SK-N-SH (cell line): ENCODE measurements at regions of chr1 and their contacts with region 1.

Region 1: DNA sequence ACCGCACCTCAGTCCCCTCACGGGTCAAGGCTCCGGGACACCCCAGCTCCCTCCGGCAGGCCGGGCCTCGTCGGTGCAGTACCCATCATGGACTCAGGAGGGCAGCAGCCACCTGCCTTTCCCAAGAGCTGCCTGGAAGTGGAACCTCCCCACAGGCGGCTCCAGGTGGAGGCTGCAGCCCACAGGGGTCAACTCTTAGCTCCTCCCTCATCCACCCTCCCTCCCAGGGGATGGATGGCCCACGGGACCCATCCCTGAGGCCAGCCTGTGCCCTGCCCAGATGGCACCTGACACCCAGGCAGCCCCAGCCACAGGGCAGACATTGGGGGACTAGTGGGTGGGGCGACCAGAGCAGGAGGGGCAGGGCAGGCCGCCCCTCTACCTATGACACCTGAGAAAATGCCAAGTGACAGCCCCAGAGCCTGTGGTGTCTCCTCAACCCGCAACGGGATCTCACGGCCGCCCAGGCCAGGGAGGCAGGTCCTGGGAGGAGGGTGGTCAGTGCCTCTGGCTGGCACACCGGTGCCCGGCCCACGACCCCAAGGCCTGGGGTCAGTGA is 1.2 kb upstream of the ARHGEF16 start:
- DNase-seq: peak; percentile 93
- H3K4me3 ChIP-seq: no peak overlapping the region; a peak in 1 of 4 replicates
- H3K27ac ChIP-seq: no peak overlapping the region
- H3K4me1 ChIP-seq: peaks cover 0 to 14% of the 10 kb centered on the region in 2 experiments; a peak in 1 of 4 replicates
- H3K27me3 ChIP-seq: no peaks in the 10 kb centered on the region
- CTCF ChIP-seq: peak; percentile 75
- EP300 ChIP-seq: no peak
- RAD21 ChIP-seq: peak; percentile 92

Region 2: GRCh38 chr1:3237994-3238702 is 215.1 kb before region 1 on chr1:
- CTCF ChIA-PET with region 1: no interaction called
- POLR2A ChIA-PET with region 1: no interaction called
- DNase-seq: no peak
- H3K4me3 ChIP-seq: no peak overlapping the region
- H3K27ac ChIP-seq: no peak overlapping the region
- H3K4me1 ChIP-seq: no peaks in the 10 kb centered on the region
- H3K27me3 ChIP-seq: no peaks in the 10 kb centered on the region
- CTCF ChIP-seq: no peak
- EP300 ChIP-seq: no peak
- RAD21 ChIP-seq: no peak

Region 3: DNA sequence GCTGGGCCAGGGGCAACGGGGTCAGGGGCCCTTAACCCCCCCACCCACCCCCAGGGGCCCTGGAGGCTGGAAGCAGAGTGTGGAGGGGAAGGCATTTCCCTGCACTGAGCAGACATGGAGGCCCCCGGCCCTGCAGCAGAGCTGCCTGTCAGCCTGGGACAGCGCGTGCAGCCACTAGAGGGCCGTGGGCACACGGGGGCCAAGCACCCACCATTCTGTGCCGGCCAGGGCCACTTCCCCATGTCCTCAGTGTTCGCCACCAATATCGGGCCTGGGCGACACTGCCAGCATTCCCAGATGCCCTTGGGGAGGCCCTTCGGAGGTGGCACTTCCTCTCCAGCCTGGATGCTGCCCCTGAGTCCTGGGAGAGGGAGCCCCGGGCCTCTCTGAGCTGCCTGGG is 22.0 kb before region 1 on chr1:
- CTCF ChIA-PET with region 1: interaction called, 12 read pairs
- POLR2A ChIA-PET with region 1: no interaction called
- DNase-seq: peak; percentile 76
- H3K4me3 ChIP-seq: no peak overlapping the region
- H3K27ac ChIP-seq: no peak overlapping the region
- H3K4me1 ChIP-seq: no peaks in the 10 kb centered on the region
- H3K27me3 ChIP-seq: peaks cover 14% of the 10 kb centered on the region; the same call in 1 of the 2 replicates
- CTCF ChIP-seq: peak; percentile 35
- EP300 ChIP-seq: no peak
- RAD21 ChIP-seq: no peak

Region 4: DNA sequence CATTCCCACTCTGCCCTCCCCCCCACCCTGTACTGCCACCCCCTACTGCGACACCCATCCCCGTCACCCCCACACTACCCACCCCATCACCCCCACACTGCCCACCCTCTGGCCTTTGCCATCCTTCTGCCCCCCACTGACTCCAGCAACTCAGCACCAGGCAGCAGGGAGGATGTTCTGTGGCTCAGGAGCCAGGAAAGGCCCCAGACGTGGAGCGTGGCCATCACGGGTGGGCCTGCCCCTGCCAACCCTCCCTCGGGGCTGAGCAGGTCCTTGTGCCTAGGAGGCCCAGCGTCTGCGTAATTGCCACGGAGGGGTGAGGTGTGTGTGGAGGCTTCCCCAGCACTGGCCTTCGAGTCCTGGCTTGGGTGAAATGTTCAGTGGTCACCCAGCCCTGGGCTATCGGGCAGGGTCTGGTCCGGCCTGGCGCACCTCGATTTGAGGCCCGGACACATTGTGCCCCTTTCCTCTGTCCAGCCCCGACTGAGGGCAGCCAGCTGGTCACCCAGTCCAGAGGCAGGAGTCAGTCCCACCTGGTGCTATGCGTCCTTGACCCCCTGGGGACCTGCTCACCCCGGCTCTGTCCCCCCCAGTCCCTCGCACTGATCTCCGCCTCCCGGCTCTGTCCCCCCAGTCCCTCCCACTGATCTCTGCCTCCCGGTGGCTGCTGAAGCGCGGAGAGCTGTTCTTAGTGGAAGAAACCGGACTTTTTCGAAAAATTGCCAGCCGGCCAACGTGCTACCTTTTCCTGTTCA is 24.1 kb after region 1 on chr1:
- CTCF ChIA-PET with region 1: interaction called, 99 read pairs
- POLR2A ChIA-PET with region 1: no interaction called
- DNase-seq: peak; percentile 73
- H3K4me3 ChIP-seq: no peak overlapping the region
- H3K27ac ChIP-seq: no peak overlapping the region
- H3K4me1 ChIP-seq: peaks cover 0 to 2% of the 10 kb centered on the region in 2 experiments; a peak in 2 of 4 replicates
- H3K27me3 ChIP-seq: no peaks in the 10 kb centered on the region
- CTCF ChIP-seq: no peak
- EP300 ChIP-seq: no peak
- RAD21 ChIP-seq: no peak

Region 5: GRCh38 chr1:3501856-3502665 is 48.8 kb after region 1 on chr1:
- CTCF ChIA-PET with region 1: interaction called, 28 read pairs
- POLR2A ChIA-PET with region 1: no interaction called
- DNase-seq: peak; percentile 75
- H3K4me3 ChIP-seq: no peak overlapping the region
- H3K27ac ChIP-seq: peak overlapping the region in 1 of 2 experiments; percentile 68; a peak in 1 of 4 replicates
- H3K4me1 ChIP-seq: peaks cover 5 to 35% of the 10 kb centered on the region in 2 experiments; a peak in 2 of 4 replicates
- H3K27me3 ChIP-seq: no peaks in the 10 kb centered on the region
- CTCF ChIP-seq: no peak
- EP300 ChIP-seq: no peak
- RAD21 ChIP-seq: no peak

Region 6: GRCh38 chr1:3564921-3565827 is 111.9 kb after region 1 on chr1:
- CTCF ChIA-PET with region 1: interaction called, 19 read pairs
- POLR2A ChIA-PET with region 1: no interaction called
- DNase-seq: peak; percentile 93
- H3K4me3 ChIP-seq: peak overlapping the region in 1 of 2 experiments; percentile 52; a peak in 1 of 4 replicates
- H3K27ac ChIP-seq: no peak overlapping the region; a peak in 1 of 4 replicates
- H3K4me1 ChIP-seq: peaks cover 0 to 45% of the 10 kb centered on the region in 2 experiments; a peak in 1 of 4 replicates
- H3K27me3 ChIP-seq: no peaks in the 10 kb centered on the region
- CTCF ChIP-seq: peak; percentile 71
- EP300 ChIP-seq: no peak
- RAD21 ChIP-seq: peak; percentile 88

Region 7: GRCh38 chr1:3611170-3612019 is 158.1 kb after region 1 on chr1 and contains the start of gene MEGF6:
- CTCF ChIA-PET with region 1: interaction called, 11 read pairs
- POLR2A ChIA-PET with region 1: no interaction called
- DNase-seq: peak; percentile 99
- H3K4me3 ChIP-seq: peak within 1 kb of the TSS; percentile 26 to 54; a peak in 2 of 4 replicates
- H3K27ac ChIP-seq: no peak within 1 kb of the TSS
- H3K4me1 ChIP-seq: peaks cover 0 to 38% of the 10 kb centered on the region in 2 experiments; a peak in 2 of 4 replicates
- H3K27me3 ChIP-seq: no peaks in the 10 kb centered on the region
- CTCF ChIP-seq: no peak
- EP300 ChIP-seq: no peak
- RAD21 ChIP-seq: no peak
- polyA plus RNA-seq, gene MEGF6: 5.8 and 7.6 TPM in 2 replicates

Region 8: GRCh38 chr1:3727042-3727824 is 274.0 kb after region 1 on chr1:
- CTCF ChIA-PET with region 1: interaction called, 14 read pairs
- POLR2A ChIA-PET with region 1: no interaction called
- DNase-seq: peak; percentile 78
- H3K4me3 ChIP-seq: no peak overlapping the region
- H3K27ac ChIP-seq: no peak overlapping the region
- H3K4me1 ChIP-seq: peaks cover 0 to 13% of the 10 kb centered on the region in 2 experiments; a peak in 1 of 4 replicates
- H3K27me3 ChIP-seq: no peaks in the 10 kb centered on the region
- CTCF ChIP-seq: peak; percentile 34
- EP300 ChIP-seq: no peak
- RAD21 ChIP-seq: peak; percentile 50